ENCODE measurements at regions of chr6 and their contacts with region 1.

Region 1: GRCh38 chr6:32558426-32559057 is 28.5 kb upstream of the HLA-DRB5 start:
- DNase-seq: peak in 2 of 9 experiments; percentile 15 to 16
- ATAC-seq: no peak
- H3K4me3 ChIP-seq: no peak overlapping the region
- H3K4me3 Mint-ChIP-seq: no peak overlapping the region
- H3K27ac ChIP-seq: no peak overlapping the region
- H3K27ac Mint-ChIP-seq: no peak overlapping the region
- H3K4me1 ChIP-seq: no peaks in the 10 kb centered on the region
- H3K4me1 Mint-ChIP-seq: no peaks in the 10 kb centered on the region
- H3K27me3 ChIP-seq: no peaks in the 10 kb centered on the region
- H3K27me3 Mint-ChIP-seq: peaks cover 14% of the 10 kb centered on the region
- CTCF ChIP-seq: no peak

Region 2: DNA sequence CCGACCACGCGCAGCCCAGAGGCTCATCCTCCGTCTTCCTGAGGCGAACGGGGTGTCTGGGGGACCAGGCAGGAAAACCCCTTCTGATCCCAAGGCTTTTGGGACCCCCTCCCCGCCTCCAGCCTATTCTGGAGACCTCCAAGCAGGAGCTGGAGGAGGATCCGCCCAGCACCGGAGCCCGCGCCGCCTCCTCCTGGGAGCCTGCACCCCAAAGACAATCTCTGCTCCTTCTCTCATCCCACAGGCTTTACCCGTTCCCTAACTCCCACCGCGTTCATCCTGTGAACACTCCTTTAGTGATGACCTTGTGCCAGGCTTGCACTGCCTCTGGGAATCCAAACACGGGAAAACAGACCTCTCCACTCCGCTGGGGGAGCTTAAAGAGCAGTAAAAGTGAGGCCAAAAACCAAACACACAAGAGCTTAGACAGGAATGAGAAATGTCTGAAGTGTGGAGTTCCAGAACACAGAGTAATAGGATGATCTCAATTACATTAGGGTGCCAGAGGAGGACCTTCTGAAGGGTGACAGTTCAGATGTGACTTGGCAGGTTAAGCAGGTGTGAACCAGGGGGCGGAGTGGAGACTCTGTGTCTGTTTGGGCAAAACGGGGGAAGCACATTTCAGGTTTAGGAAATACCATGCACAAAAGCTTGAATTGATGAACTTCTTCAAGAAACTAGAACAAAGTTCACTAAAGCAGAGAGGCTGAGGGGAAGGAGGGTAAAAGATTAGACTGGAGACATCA is 36.1 kb before region 1 on chr6:
- CTCF ChIA-PET with region 1: no interaction called
- POLR2A ChIA-PET with region 1: no interaction called
- intact Hi-C with region 1: loop called (anchors 1 to 2 kb)
- DNase-seq: no peak
- ATAC-seq: no peak
- H3K4me3 ChIP-seq: no peak overlapping the region
- H3K4me3 Mint-ChIP-seq: no peak overlapping the region
- H3K27ac ChIP-seq: no peak overlapping the region
- H3K27ac Mint-ChIP-seq: no peak overlapping the region
- H3K4me1 ChIP-seq: no peaks in the 10 kb centered on the region
- H3K4me1 Mint-ChIP-seq: peaks cover 7% of the 10 kb centered on the region
- H3K27me3 ChIP-seq: no peaks in the 10 kb centered on the region
- H3K27me3 Mint-ChIP-seq: no peaks in the 10 kb centered on the region
- CTCF ChIP-seq: no peak

Region 3: GRCh38 chr6:32581315-32582095 is 23.0 kb after region 1 on chr6:
- CTCF ChIA-PET with region 1: no interaction called
- POLR2A ChIA-PET with region 1: no interaction called
- intact Hi-C with region 1: loop called (anchors 1 to 2 kb)
- DNase-seq: no peak
- ATAC-seq: no peak
- H3K4me3 ChIP-seq: no peak overlapping the region
- H3K4me3 Mint-ChIP-seq: no peak overlapping the region
- H3K27ac ChIP-seq: no peak overlapping the region
- H3K27ac Mint-ChIP-seq: no peak overlapping the region
- H3K4me1 ChIP-seq: peaks cover 5% of the 10 kb centered on the region
- H3K4me1 Mint-ChIP-seq: peaks cover 30% of the 10 kb centered on the region
- H3K27me3 ChIP-seq: no peaks in the 10 kb centered on the region
- H3K27me3 Mint-ChIP-seq: no peaks in the 10 kb centered on the region
- CTCF ChIP-seq: no peak